Panc1 (cell line): ENCODE measurements at regions of chr1 and their contacts with region 1.

Region 1: GRCh38 chr1:119613769-119614720 is 34.0 kb downstream of the ZNF697 start:
- DNase-seq: peak; percentile 69
- ATAC-seq: peak; percentile 96
- H3K4me3 ChIP-seq: no peak overlapping the region
- H3K27ac ChIP-seq: no peak overlapping the region
- H3K4me1 ChIP-seq: no peaks in the 10 kb centered on the region
- H3K27me3 ChIP-seq: no peaks in the 10 kb centered on the region; the same call in 1 of the 2 replicates
- CTCF ChIP-seq: peak; percentile 94

Region 2: GRCh38 chr1:119662034-119662437 is 48.0 kb after region 1 on chr1:
- CTCF ChIA-PET with region 1: interaction called, 11 read pairs
- POLR2A ChIA-PET with region 1: interaction called, 3 read pairs
- in situ Hi-C with region 1: no loop called
- intact Hi-C with region 1: loop called (anchors 1 kb)
- DNase-seq: no peak
- ATAC-seq: no peak
- H3K4me3 ChIP-seq: no peak overlapping the region
- H3K27ac ChIP-seq: no peak overlapping the region
- H3K4me1 ChIP-seq: no peaks in the 10 kb centered on the region
- H3K27me3 ChIP-seq: peaks cover 18% of the 10 kb centered on the region; the same call in 1 of the 2 replicates
- CTCF ChIP-seq: no peak

Region 3: DNA sequence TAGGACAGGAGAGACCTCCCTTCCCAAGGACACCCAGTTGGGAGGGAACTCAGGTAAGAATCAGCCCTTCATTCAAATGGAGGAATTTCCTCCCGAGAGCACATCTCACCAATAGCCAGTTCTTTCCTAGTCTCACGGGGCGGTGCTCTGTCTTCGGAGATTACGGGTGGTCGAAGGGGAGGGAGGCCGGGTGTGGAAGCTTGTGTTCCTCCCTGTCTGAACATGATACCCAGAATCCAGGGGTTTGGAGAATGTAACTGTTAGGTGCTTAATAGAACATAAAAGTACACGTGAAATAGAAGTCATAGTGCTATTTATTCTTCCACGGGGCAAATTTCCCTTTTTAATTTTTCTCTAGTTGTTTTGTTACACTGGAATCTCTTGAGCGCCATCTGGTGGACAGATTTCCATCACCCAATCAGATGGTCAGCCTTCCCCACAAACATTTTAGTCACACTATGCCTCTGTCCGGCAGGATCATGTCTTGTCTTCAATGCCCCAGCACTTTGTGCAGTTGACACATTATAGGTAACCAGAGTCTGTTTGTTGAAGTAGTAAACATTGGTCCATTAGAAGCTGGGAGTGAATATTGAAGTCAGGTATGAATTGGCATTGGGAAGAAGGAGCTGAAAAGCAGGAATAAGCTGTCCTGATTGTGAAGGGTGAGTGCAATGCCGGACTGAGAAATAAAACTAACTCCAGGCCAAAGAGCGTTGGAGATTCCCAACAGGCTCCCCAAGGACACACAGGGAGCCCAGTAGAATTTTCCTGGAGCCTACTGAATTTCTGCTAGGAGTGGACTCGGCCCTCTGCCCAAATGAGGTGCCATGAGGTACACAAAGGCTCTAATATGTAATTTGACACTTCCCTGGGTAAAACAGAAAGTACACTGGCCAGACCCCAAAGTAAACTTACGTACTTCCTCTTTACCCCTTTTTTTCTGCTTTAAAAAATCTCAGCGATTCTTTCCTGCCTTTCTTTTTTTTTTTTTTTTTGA is 61.6 kb after region 1 on chr1:
- CTCF ChIA-PET with region 1: interaction called, 13 read pairs
- POLR2A ChIA-PET with region 1: no interaction called
- in situ Hi-C with region 1: no loop called
- intact Hi-C with region 1: loop called (anchors 1 kb)
- DNase-seq: peak; percentile 73
- ATAC-seq: peak; percentile 89
- H3K4me3 ChIP-seq: peak overlapping the region; percentile 28 to 46
- H3K27ac ChIP-seq: no peak overlapping the region
- H3K4me1 ChIP-seq: peaks cover 4% of the 10 kb centered on the region
- H3K27me3 ChIP-seq: peaks cover 3% of the 10 kb centered on the region; the same call in 1 of the 2 replicates
- CTCF ChIP-seq: peak; percentile 85

Region 4: GRCh38 chr1:119715542-119715941 is 101.5 kb after region 1 on chr1:
- CTCF ChIA-PET with region 1: no interaction called
- POLR2A ChIA-PET with region 1: no interaction called
- in situ Hi-C with region 1: no loop called
- intact Hi-C with region 1: no loop called
- DNase-seq: no peak
- ATAC-seq: no peak
- H3K4me3 ChIP-seq: no peak overlapping the region
- H3K27ac ChIP-seq: no peak overlapping the region
- H3K4me1 ChIP-seq: peaks cover 15% of the 10 kb centered on the region
- H3K27me3 ChIP-seq: peaks cover 3% of the 10 kb centered on the region; the same call in 1 of the 2 replicates
- CTCF ChIP-seq: no peak

Region 5: GRCh38 chr1:120176092-120176855 is 562.2 kb after region 1 on chr1 and contains the start of gene SEC22B:
- CTCF ChIA-PET with region 1: interaction called, 15 read pairs
- POLR2A ChIA-PET with region 1: no interaction called
- in situ Hi-C with region 1: no loop called
- intact Hi-C with region 1: no loop called
- DNase-seq: peak; percentile 93
- ATAC-seq: peak; percentile 97
- H3K4me3 ChIP-seq: peak within 1 kb of the TSS; percentile 76 to 100
- H3K27ac ChIP-seq: peak within 1 kb of the TSS; percentile 99
- H3K4me1 ChIP-seq: peaks cover 8% of the 10 kb centered on the region
- H3K27me3 ChIP-seq: no peaks in the 10 kb centered on the region
- CTCF ChIP-seq: no peak
- total RNA-seq, gene SEC22B: 23.7 TPM